Heart right ventricle (tissue), 16 donors: ENCODE measurements at regions of chr5 and their contacts with region 1.

Region 1: DNA sequence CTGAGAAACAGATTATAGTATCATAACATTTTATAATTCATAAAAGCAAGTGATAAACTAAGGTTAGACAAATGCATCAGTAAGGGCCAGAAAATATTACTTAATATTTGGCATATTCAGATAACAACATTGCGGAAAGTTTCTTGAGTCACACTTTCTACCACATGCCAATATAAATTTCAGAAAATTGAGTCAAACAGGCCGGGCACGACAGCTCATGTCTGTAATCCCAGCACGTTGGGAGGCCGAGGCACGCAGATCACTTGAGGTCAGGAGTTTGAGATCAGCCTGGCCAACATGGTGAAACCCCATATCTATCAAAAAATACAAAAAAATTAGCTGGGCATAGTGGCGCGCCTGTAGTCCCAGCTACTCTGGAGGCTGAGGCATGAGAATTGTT is 47.1 kb downstream of the SLC38A9 start:
- DNase-seq: no peak
- ATAC-seq: no peak
- H3K4me3 ChIP-seq: no peak overlapping the region
- H3K27ac ChIP-seq: no peak overlapping the region
- H3K4me1 ChIP-seq: no peaks in the 10 kb centered on the region
- H3K27me3 ChIP-seq: no peaks in the 10 kb centered on the region
- CTCF ChIP-seq: no peak

Region 2: DNA sequence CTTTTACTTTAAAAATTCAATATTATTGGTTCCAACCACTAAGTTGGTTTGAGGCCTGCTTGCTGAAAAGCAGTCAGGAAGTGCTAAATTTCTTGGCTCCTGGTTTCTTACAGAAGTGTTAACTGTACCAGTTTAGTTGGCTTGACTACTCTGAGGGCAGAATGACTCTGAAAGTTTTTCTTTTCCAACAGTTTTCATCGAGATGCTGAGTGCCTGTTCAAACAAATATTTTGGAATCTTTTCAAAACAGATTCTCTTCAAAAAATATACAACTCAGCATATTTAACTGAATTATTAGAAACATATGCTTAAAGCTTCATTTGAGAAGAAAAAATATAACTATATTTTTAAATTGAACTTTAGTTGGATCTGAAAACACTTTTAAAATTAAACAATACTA is 10.1 kb after region 1 on chr5:
- intact Hi-C with region 1: loop called in 1 of 10 experiments (anchors 2 kb)
- DNase-seq: no peak
- ATAC-seq: no peak
- H3K4me3 ChIP-seq: no peak overlapping the region
- H3K27ac ChIP-seq: peak overlapping the region in 3 of 10 donors; percentile 16 to 32 (median 28)
- H3K4me1 ChIP-seq: peaks cover 0 to 48% (median 20%) of the 10 kb centered on the region in 9 donors
- H3K27me3 ChIP-seq: no peaks in the 10 kb centered on the region
- CTCF ChIP-seq: no peak